Right ventricle myocardium inferior (tissue), 1 donor: ENCODE measurements at regions of chr4 and their contacts with region 1.

Region 1: DNA sequence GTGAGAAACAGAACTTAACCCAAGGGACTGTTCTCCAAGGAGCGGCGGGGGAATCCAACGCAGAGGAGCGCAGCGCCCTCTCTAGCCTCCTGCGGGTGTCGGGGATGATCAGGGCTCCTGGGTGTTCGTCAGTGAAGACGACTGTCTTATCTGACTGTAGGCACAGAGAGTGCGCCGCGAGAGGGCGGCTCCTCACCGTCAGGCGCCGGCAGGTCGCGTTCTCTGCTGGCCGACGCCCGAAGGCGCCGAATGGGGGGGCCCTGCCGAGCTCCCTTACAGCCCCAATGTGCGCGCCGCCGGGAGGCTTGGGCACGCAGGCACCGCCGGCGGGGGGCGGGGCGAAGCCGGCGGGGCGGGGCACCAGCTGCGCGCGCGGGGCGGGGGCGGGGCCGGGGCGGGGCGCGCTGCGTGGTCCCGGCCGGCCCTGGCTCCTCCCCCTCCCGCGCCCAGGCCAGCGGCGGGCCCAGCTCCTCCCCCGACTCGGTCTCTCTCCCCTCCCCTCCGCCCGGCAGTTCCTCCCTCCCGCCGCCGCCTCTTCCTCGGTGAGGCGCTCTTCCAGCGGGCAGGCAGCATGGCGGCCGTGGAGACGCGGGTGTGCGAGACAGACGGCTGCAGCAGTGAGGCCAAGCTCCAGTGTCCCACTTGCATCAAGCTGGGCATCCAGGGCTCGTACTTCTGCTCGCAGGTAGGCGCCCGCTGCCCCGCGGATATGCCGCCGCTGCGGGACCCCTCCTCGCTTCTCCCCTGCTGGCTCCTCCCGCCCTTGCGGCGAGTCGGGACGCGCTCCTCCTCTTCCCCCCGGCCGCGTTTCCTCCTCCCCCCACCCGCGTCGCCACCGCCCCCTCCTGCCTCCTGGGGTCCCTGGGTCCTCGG is at the start of gene METAP1:
- DNase-seq: peak; percentile 97
- ATAC-seq: peak; percentile 96
- total RNA-seq, gene METAP1: 67.4 TPM

Region 2: DNA sequence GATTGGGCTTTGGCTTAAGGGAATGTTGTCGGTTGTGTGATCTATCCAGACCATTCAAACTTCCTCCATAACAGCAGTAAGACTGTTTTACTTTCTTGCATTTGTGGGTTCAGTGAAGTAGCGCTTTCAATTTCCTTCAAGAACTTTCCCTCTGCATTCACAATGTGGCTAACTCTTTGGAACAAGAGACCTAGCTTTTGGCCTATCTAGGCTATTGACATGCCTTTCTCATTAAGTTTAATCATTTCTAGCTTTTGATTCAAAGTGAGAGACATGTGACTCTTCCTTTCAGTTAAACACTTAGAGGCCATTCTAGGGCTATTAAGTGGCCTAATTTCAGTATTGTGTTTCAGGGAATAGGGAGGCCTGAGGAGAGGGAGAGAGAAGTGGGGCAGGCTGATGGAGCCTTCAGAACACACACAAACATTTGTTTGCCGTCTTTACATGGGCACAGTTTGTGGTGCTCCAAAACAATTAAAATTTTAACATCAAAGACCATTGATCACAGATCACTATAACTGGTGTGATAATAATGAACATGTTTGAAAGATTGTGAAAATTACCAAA is 59.1 kb after region 1 on chr4:
- intact Hi-C with region 1: loop called (anchors 1 kb)
- DNase-seq: no peak
- ATAC-seq: no peak

Region 3: DNA sequence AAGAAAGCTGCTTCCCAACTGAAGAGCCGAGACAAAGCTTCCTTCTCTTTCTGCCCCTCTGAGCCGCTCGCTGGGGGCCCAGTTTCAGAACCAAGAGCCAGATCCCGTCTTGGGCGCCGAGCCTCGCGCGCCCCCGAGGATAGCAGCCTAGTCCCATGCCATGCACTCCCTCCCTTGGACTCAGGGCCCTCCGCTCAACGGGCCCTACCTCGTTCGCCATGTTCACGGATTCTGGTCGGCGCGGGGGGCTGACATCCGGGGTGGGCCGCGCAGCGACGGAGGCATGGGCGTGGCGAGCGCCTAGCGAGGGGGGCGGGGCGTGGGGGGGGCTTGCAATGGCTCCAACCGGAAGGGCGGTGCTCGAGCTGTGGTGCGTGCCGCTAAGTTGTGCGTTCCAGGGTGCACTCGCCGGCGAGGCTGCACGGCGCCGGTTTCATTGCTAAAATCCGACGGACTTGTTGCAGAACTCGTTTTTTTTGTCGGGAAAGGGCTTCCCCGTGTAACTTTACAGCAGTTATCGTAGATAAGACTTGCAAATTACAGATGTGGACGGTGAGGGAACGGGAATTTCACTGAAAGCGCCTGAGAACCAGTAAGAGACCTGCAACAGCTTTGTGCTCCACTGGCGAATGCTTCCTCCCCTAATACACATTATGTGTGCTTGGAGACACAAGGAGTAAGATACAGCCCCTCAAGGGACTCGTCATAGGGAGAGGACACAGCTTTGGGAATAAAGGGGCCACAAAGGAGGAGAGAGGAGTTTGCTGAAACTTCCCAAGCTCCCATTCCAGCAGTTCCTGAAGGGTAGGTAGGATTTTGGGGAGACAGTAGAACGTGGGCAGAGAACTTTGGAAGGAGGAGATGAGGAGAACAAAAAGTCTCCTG is 93.3 kb after region 1 on chr4 and contains the start of gene ADH5:
- intact Hi-C with region 1: loop called (anchors 1 kb)
- DNase-seq: peak; percentile 95
- ATAC-seq: peak; percentile 99
- total RNA-seq, gene ADH5: 193 TPM